Activated CD4-positive, alpha-beta T cell treated with anti-CD3 and anti-CD28 coated beads for 36 hours (primary cell): ENCODE measurements at regions of chr10 and their contacts with region 1.

Region 1: GRCh38 chr10:51699475-51700227 is at the start of gene CSTF2T:
- DNase-seq: peak; percentile 93
- ATAC-seq: peak; percentile 89
- H3K4me3 Mint-ChIP-seq: peak within 1 kb of the TSS; percentile 96
- H3K27ac Mint-ChIP-seq: peak within 1 kb of the TSS; percentile 100
- H3K4me1 Mint-ChIP-seq: peaks cover 51% of the 10 kb centered on the region
- H3K27me3 Mint-ChIP-seq: no peaks in the 10 kb centered on the region
- total RNA-seq, gene CSTF2T: 24.5 to 27.6 TPM

Region 2: GRCh38 chr10:51832652-51833383 is 133.2 kb after region 1 on chr10:
- CTCF ChIA-PET with region 1: no interaction called
- POLR2A ChIA-PET with region 1: no interaction called
- intact Hi-C with region 1: no loop called
- DNase-seq: peak; percentile 59
- ATAC-seq: peak; percentile 97
- H3K4me3 Mint-ChIP-seq: no peak overlapping the region
- H3K27ac Mint-ChIP-seq: no peak overlapping the region
- H3K4me1 Mint-ChIP-seq: peaks cover 7% of the 10 kb centered on the region
- H3K27me3 Mint-ChIP-seq: peaks cover 2% of the 10 kb centered on the region

Region 3: GRCh38 chr10:51879238-51879637 is 179.6 kb after region 1 on chr10:
- CTCF ChIA-PET with region 1: no interaction called
- POLR2A ChIA-PET with region 1: no interaction called
- intact Hi-C with region 1: loop called (anchors 1 to 5 kb)
- DNase-seq: peak; percentile 40
- ATAC-seq: peak; percentile 94
- H3K4me3 Mint-ChIP-seq: no peak overlapping the region
- H3K27ac Mint-ChIP-seq: peak overlapping the region; percentile 4
- H3K4me1 Mint-ChIP-seq: peaks cover 17% of the 10 kb centered on the region
- H3K27me3 Mint-ChIP-seq: no peaks in the 10 kb centered on the region